ENCODE measurements at regions of chr7 and their contacts with region 1.

Region 1: DNA sequence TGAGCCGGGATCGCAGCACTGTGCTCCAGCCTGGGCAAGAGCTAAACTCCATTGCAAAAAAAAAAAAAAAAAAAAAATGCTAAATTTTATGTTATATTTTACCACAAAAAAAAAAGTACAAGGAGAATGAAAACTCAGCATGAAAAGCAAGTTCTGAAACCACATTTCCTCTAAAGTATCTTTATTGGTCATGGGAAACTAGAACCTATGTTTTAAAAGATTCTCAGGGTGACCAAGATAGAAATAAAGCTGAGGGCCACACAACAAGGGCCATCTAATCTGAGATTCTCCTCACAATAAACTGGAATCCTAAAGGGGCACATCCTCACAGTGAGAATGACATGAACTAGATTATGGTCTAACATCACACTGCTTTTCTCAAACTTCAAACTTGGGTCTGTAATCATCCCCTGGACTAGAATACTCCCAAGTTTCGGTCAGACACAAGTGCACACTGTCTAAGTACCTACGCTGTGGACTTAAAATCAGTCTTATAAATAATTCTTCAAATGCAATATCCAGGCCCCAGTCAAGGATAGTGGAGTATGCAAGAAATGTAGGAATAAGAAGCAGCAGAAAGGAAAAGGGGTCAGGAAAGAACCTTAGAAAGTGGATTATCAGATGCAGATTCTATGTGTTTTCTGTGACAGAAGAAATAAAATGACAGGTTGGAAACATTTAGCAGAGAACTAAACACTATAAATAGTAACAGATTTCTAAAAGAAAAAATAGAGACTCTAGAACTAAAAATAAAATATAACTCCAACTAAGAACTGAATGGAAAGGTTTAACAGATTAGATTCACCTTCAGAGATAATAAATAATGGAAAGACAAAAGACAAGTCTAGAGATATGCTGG is 49.9 kb downstream of the COA1 start:
- DNase-seq: no peak
- H3K4me3 ChIP-seq: no peak overlapping the region
- H3K27ac ChIP-seq: no peak overlapping the region
- H3K4me1 ChIP-seq: no peaks in the 10 kb centered on the region
- H3K27me3 ChIP-seq: no peaks in the 10 kb centered on the region
- CTCF ChIP-seq: no peak
- POLR2A ChIP-seq: no peak

Region 2: DNA sequence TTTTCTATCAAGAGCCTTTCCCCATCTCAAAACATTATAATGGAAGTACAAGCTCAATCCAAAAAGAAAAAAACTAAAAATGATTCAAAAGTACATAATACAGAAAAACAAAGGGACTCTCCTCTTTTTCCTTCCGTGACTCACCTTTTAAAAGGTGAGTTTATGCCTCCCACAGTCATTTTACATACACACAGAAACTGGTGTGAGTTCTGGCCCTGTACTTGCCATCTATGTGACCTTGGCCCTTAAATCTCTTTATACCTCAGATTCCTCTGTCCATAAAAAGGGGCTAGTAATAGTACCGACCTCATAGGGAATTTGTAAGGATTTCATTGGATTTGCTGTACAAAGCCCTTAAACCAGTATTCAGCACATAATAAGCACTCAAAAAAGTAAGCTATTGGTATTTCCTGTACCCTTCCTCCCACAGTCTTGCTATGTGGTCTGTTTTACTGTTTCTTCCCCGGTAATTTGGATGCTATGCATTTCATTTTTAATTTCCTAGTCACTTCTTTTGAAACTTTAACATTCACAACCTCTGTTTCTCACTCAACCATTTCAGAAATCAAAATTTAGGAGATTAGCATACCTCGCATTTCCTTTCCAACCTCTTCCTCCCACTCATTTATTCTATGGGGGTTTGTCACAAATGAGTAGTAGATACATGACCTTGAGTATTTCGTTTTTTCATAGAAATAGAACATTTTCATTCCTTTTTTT is 57.5 kb before region 1 on chr7:
- intact Hi-C with region 1: no loop called
- DNase-seq: no peak
- H3K4me3 ChIP-seq: no peak overlapping the region
- H3K27ac ChIP-seq: no peak overlapping the region
- H3K4me1 ChIP-seq: no peaks in the 10 kb centered on the region
- H3K27me3 ChIP-seq: no peaks in the 10 kb centered on the region
- CTCF ChIP-seq: no peak
- POLR2A ChIP-seq: no peak

Region 3: DNA sequence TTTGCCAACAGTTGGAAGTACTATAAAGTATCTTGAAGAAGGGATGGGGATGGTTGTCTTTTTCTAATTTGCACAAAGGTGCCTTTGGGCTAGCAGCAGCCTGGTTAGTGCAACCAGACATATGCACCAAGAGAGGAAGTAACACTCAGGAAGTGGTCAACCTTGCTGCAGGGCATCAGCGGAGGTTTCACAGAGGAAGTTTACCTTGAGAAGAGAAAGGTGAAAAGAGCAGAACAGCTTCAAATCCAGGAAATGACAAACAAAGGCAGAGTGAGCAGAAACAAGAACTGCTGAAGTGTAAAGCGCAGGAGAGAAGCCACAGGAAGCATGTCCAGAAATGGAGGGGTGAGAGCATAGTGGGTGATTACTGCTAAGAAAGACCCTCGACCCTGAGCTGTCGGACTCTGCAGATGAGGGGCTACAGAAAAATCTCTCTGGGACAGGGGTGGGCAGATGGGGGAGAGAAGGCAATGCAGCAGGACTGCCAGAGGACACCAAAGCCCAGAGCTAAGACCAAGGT is 29.6 kb before region 1 on chr7:
- intact Hi-C with region 1: loop called (anchors 2 kb)
- DNase-seq: no peak
- H3K4me3 ChIP-seq: no peak overlapping the region
- H3K27ac ChIP-seq: peak overlapping the region; percentile 60 to 90
- H3K4me1 ChIP-seq: peaks cover 3 to 10% of the 10 kb centered on the region in 2 donors
- H3K27me3 ChIP-seq: no peaks in the 10 kb centered on the region
- CTCF ChIP-seq: no peak
- POLR2A ChIP-seq: no peak

Region 4: DNA sequence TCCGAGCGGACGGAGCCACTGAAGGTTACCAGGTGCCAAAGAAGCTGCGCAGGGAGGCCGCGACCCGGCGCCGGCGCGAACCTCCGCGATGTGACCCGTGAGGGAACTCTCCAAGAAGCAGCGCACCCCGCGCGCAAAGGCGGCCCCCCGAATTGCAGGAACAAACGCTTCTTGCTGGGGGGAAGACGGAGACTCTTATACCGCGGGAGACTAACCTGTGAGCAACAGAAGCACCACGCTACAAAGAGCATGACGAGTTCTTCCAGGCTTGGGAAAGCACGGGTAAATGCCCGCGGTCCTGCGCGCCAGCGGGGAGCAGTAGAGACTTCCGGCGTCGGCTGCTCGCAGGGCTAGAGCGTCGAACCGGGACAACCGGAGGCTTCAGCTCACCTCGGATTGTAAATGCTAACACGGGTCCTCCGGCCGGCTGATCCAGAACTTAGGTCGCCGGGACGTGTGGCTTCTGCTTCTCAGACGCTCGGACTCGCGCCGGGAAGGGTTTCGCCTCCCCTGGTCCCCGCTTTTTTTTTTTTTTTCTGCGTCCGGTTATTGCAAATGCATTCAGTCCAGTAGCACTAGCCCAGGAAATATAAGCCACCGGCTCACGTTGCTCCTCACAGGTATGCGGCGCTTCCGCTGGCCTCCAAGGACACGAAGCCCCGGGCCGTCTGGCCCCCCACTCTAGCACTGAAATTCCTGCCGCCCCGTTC is 49.9 kb after region 1 on chr7 and contains the start of gene COA1:
- intact Hi-C with region 1: no loop called
- DNase-seq: peak; percentile 67 to 79
- H3K4me3 ChIP-seq: peak within 1 kb of the TSS; percentile 63 to 97 (median 87)
- H3K27ac ChIP-seq: peak within 1 kb of the TSS; percentile 84 to 87
- H3K4me1 ChIP-seq: peaks cover 0 to 10% of the 10 kb centered on the region in 2 donors
- H3K27me3 ChIP-seq: no peaks in the 10 kb centered on the region
- CTCF ChIP-seq: peak in 1 of 3 donors; percentile 11
- POLR2A ChIP-seq: no peak
- total RNA-seq, gene COA1: 39.0 to 94.3 (median 91.4) TPM